Sigmoid colon (tissue), 7 donors: ENCODE measurements at regions of chr9 and their contacts with region 1.

Region 1: DNA sequence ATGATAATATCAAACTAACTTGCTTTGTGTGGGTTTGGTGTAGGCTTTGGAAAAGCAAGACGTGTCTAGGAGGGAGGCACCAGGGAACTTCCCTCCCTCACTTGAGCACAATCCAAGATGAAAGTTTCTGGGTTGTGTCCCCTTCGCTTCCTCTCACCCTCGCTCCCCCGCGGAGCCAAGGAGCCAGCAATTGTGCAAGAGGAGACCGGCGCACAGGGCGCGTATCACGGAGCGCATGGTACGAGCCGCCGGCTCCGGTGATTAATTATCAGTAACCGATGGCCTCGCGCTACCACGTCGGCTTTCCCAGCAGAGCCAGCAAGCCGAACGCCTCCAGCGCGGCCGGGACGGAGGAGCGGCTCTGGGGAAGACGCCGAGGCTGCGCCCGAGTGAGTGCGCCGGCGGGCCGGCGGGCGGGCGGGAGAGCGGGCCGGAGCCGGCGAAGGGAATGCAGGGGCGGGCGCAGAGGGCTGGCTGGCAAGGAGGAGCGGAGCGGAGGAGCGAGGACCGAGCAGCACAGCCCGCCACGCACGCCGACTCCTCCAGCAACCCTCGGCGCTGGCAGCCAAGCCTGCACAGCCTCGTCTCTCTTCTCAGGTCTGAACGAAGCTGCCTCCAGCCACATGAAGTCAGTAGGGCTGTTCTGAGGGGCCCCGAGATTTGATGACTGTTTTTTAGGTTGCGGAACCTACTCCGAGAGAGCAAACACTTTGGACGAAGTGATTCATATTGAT is 143.6 kb downstream of the BNC2 start:
- DNase-seq: peak; percentile 95
- H3K4me3 ChIP-seq: peak overlapping the region; percentile 44 to 63 (median 59)
- H3K27ac ChIP-seq: peak overlapping the region; percentile 87 to 91 (median 89)
- H3K4me1 ChIP-seq: peaks cover 0 to 83% (median 42%) of the 10 kb centered on the region in 4 donors
- H3K27me3 ChIP-seq: no peaks in the 10 kb centered on the region
- CTCF ChIP-seq: no peak
- EP300 ChIP-seq: peak in 1 of 4 donors; percentile 44
- POLR2A ChIP-seq: peak in 1 of 2 donors; percentile 5

Region 2: GRCh38 chr9:16191691-16192402 is 535.0 kb before region 1 on chr9:
- intact Hi-C with region 1: loop called (anchors 5 kb)
- DNase-seq: peak; percentile 89
- H3K4me3 ChIP-seq: peak overlapping the region in 1 of 4 donors; percentile 8
- H3K27ac ChIP-seq: peak overlapping the region in 3 of 4 donors; percentile 27 to 70 (median 60)
- H3K4me1 ChIP-seq: peaks cover 0 to 39% (median 22%) of the 10 kb centered on the region in 4 donors
- H3K27me3 ChIP-seq: no peaks in the 10 kb centered on the region
- CTCF ChIP-seq: peak; percentile 65 to 85 (median 78)
- EP300 ChIP-seq: no peak
- POLR2A ChIP-seq: no peak

Region 3: DNA sequence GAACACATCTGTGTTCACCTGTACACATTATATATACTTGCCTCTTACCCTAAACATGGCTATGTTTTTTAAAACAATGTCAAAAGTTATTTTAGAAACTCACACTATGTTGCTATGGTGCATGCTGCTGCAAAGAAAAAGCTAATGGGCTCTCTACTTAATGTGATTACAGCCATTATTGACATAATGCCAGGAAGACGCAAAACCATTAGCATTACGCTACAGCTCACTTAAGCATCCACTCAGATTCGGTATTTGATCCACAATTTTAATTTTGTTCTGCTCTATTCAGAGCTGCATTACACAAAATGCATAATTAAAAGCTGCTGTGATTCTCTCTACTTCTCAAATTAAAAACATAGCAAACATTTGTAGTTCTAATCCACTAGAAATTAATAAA is 251.6 kb before region 1 on chr9:
- intact Hi-C with region 1: no loop called
- DNase-seq: no peak
- H3K4me3 ChIP-seq: no peak overlapping the region
- H3K27ac ChIP-seq: no peak overlapping the region
- H3K4me1 ChIP-seq: peaks cover 0 to 15% (median 4%) of the 10 kb centered on the region in 4 donors
- H3K27me3 ChIP-seq: no peaks in the 10 kb centered on the region
- CTCF ChIP-seq: no peak
- EP300 ChIP-seq: no peak
- POLR2A ChIP-seq: no peak

Region 4: GRCh38 chr9:16532681-16533450 is 194.0 kb before region 1 on chr9:
- intact Hi-C with region 1: loop called (anchors 5 kb)
- DNase-seq: no peak
- H3K4me3 ChIP-seq: no peak overlapping the region
- H3K27ac ChIP-seq: peak overlapping the region in 2 of 4 donors; percentile 54 to 61
- H3K4me1 ChIP-seq: peaks cover 0 to 73% (median 43%) of the 10 kb centered on the region in 4 donors
- H3K27me3 ChIP-seq: no peaks in the 10 kb centered on the region
- CTCF ChIP-seq: no peak
- EP300 ChIP-seq: no peak
- POLR2A ChIP-seq: no peak

Region 5: GRCh38 chr9:16579872-16580432 is 146.9 kb before region 1 on chr9:
- intact Hi-C with region 1: loop called (anchors 5 kb)
- DNase-seq: no peak
- H3K4me3 ChIP-seq: no peak overlapping the region
- H3K27ac ChIP-seq: peak overlapping the region in 3 of 4 donors; percentile 3 to 86 (median 79)
- H3K4me1 ChIP-seq: peaks cover 0 to 85% (median 71%) of the 10 kb centered on the region in 4 donors
- H3K27me3 ChIP-seq: no peaks in the 10 kb centered on the region
- CTCF ChIP-seq: no peak
- EP300 ChIP-seq: no peak
- POLR2A ChIP-seq: no peak

Region 6: GRCh38 chr9:16653491-16654399 is 73.1 kb before region 1 on chr9:
- intact Hi-C with region 1: loop called (anchors 5 kb)
- DNase-seq: peak; percentile 76
- H3K4me3 ChIP-seq: peak overlapping the region; percentile 5 to 37 (median 34)
- H3K27ac ChIP-seq: peak overlapping the region; percentile 7 to 83 (median 80)
- H3K4me1 ChIP-seq: peaks cover 0 to 76% (median 54%) of the 10 kb centered on the region in 4 donors
- H3K27me3 ChIP-seq: no peaks in the 10 kb centered on the region
- CTCF ChIP-seq: no peak
- EP300 ChIP-seq: no peak
- POLR2A ChIP-seq: no peak

Region 7: GRCh38 chr9:16679327-16679821 is 47.5 kb before region 1 on chr9:
- intact Hi-C with region 1: loop called (anchors 2 kb)
- DNase-seq: no peak
- H3K4me3 ChIP-seq: no peak overlapping the region
- H3K27ac ChIP-seq: peak overlapping the region in 3 of 4 donors; percentile 7 to 63 (median 52)
- H3K4me1 ChIP-seq: peaks cover 0 to 56% (median 50%) of the 10 kb centered on the region in 4 donors
- H3K27me3 ChIP-seq: no peaks in the 10 kb centered on the region
- CTCF ChIP-seq: no peak
- EP300 ChIP-seq: no peak
- POLR2A ChIP-seq: no peak

Region 8: GRCh38 chr9:17003576-17004240 is 276.8 kb after region 1 on chr9:
- intact Hi-C with region 1: no loop called
- DNase-seq: no peak
- H3K4me3 ChIP-seq: no peak overlapping the region
- H3K27ac ChIP-seq: no peak overlapping the region
- H3K4me1 ChIP-seq: peaks cover 0 to 10% (median 5%) of the 10 kb centered on the region in 4 donors
- H3K27me3 ChIP-seq: no peaks in the 10 kb centered on the region
- CTCF ChIP-seq: no peak
- EP300 ChIP-seq: no peak
- POLR2A ChIP-seq: no peak